ENCODE measurements at regions of chr6 and their contacts with region 1.

Region 1: GRCh38 chr6:26309731-26310142 is 55.3 kb upstream of the BTN3A2 start:
- DNase-seq: peak in 1 of 2 experiments; percentile 45
- ATAC-seq: peak in 1 of 2 experiments; percentile 9; a peak in 2 of 6 replicates
- H3K4me3 ChIP-seq: no peak overlapping the region
- H3K27ac ChIP-seq: peak overlapping the region; percentile 46 to 80; a peak in 5 of 6 replicates
- H3K4me1 ChIP-seq: peaks cover 20% of the 10 kb centered on the region
- CTCF ChIP-seq: no peak
- EP300 ChIP-seq: no peak
- POLR2A ChIP-seq: no peak
- RAD21 ChIP-seq: no peak

Region 2: DNA sequence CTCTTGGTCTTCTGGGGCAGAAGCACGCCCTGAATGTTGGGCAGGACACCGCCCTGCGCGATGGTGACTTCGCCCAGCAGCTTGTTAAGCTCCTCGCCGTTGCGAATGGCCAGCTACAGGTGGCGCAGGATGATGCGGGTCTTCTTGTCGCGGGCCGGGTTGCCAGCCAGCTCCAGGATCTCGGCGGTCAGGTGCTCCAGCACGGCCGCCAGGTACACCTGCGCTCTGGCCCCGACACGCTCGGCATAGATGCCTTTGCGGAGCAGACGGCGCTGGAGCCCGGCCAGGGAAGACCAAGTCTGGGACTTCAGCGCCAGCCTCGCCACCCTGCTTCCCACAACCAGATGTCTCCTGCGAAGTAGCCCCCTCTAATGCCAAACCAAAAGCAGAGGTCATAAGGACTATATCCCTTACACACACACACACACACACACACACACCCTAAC is 427.7 kb before region 1 on chr6:
- CTCF ChIA-PET with region 1: no interaction called
- POLR2A ChIA-PET with region 1: no interaction called
- DNase-seq: peak; percentile 10 to 77
- ATAC-seq: peak; percentile 86 to 92
- H3K4me3 ChIP-seq: peak overlapping the region; percentile 30; the same call in 1 of the 3 replicates
- H3K27ac ChIP-seq: peak overlapping the region; percentile 79 to 89
- H3K4me1 ChIP-seq: peaks cover 23% of the 10 kb centered on the region
- CTCF ChIP-seq: peak; percentile 45
- EP300 ChIP-seq: no peak
- POLR2A ChIP-seq: no peak
- RAD21 ChIP-seq: peak; percentile 12 to 45; a peak in 4 of 5 replicates

Region 3: GRCh38 chr6:26285143-26286134 is 24.3 kb before region 1 on chr6:
- CTCF ChIA-PET with region 1: no interaction called
- POLR2A ChIA-PET with region 1: interaction called, 12 read pairs
- DNase-seq: peak; percentile 65 to 99
- ATAC-seq: peak; percentile 81 to 90
- H3K4me3 ChIP-seq: peak overlapping the region; percentile 64
- H3K27ac ChIP-seq: peak overlapping the region; percentile 93 to 94
- H3K4me1 ChIP-seq: peaks cover 34% of the 10 kb centered on the region
- CTCF ChIP-seq: no peak
- EP300 ChIP-seq: peak; percentile 37 to 63; a peak in 2 of 5 replicates
- POLR2A ChIP-seq: peak; percentile 92
- RAD21 ChIP-seq: no peak

Region 4: GRCh38 chr6:26322645-26323482 is 13.1 kb after region 1 on chr6:
- CTCF ChIA-PET with region 1: interaction called, 11 read pairs
- POLR2A ChIA-PET with region 1: no interaction called
- DNase-seq: peak in 1 of 2 experiments; percentile 88
- ATAC-seq: peak; percentile 79 to 81
- H3K4me3 ChIP-seq: peak overlapping the region; percentile 56
- H3K27ac ChIP-seq: peak overlapping the region; percentile 83 to 91; a peak in 4 of 6 replicates
- H3K4me1 ChIP-seq: peaks cover 14% of the 10 kb centered on the region
- CTCF ChIP-seq: no peak
- EP300 ChIP-seq: no peak
- POLR2A ChIP-seq: no peak
- RAD21 ChIP-seq: no peak